PC-3 (cell line): ENCODE measurements at regions of chr22 and their contacts with region 1.

Region 1: DNA sequence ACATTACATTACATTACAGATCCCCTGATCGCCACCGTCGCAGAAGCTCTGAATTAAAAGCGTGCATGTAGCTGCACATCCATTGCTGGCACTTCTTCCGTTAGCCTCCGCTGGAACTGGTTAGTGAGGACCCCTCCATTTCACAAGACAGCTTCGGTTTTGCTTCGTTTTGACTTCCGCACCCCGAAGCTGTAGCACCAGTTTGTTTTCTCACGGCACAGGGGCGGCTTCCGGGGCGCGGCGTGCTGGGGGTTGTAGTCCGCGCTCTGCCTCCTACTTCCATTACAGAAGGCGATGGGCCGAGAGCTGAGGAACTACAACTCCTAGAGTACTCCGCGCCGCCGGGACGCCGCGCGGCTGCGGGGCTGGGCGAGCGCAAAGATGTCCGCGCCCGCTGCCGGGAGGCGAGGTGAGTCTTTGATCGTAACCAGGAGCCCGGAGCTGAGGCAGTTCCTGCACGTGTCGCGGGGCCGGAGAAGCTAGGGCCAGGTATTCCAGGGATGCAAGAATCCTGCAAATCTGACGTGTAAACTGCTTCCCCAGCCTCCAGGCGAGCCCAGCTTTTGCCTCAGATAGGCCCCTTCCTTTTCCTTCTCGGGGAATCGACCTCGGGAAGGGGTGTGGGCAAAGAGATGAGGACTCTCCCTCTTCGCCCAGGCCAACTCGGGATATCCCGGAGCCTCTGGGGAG is at the start of gene PEX26:
- DNase-seq: peak; percentile 85
- ATAC-seq: peak; percentile 95
- H3K4me3 ChIP-seq: peak within 1 kb of the TSS; percentile 98
- H3K27ac ChIP-seq: peak within 1 kb of the TSS; percentile 73
- H3K4me1 ChIP-seq: peaks cover 24% of the 10 kb centered on the region
- H3K27me3 ChIP-seq: no peaks in the 10 kb centered on the region
- CTCF ChIP-seq: no peak
- total RNA-seq, gene PEX26: 30.6 and 51.3 TPM in 2 replicates

Region 2: GRCh38 chr22:17830043-17830961 is 247.5 kb before region 1 on chr22:
- CTCF ChIA-PET with region 1: interaction called, 18 read pairs
- POLR2A ChIA-PET with region 1: no interaction called
- intact Hi-C with region 1: loop called (anchors 1 kb)
- DNase-seq: peak; percentile 80
- ATAC-seq: peak; percentile 93
- H3K4me3 ChIP-seq: no peak overlapping the region
- H3K27ac ChIP-seq: no peak overlapping the region
- H3K4me1 ChIP-seq: no peaks in the 10 kb centered on the region
- H3K27me3 ChIP-seq: no peaks in the 10 kb centered on the region
- CTCF ChIP-seq: peak; percentile 82

Region 3: DNA sequence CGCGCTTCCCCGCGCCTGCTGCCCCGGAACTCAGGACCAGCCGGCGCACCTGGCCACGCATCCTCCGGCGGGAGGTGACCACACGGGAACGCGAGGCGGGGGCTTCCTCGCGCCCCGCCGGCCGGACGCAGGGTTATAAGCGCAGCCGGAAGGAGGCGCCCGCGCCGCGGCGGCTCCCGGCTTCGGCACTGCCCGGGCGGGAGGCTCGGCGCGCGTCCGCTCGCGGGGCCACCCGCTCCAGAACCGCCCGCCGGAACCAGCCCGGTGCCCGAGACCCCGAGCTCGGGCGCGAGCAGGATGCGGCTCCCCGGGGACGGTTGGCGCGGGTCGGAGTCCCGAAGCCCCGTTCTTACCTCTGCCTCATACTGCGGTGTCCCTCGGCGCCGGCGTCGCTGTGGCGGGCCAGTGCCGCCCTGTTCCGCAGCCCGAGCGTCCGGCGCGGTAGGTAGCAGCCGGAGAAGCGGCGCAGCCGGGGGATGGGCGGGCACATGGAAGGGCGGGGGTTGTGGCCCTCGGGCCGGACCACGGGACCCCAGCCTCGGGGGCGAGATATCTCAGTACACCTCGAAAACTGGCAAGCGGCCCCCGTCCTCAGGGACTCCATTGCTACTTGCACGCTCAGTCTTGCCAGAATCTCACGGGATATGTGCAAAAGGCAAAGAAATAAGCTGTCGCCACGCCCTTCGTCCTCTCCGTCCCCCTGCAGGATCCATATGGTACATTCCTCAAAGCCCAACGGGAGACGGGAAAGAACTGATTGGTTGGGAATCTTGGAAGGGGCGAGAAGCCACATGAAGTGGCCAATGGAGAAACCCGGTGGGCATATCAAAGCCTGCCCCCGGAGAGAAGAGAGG is 76.5 kb before region 1 on chr22:
- CTCF ChIA-PET with region 1: interaction called, 12 read pairs
- POLR2A ChIA-PET with region 1: no interaction called
- intact Hi-C with region 1: loop called (anchors 1 kb)
- DNase-seq: peak; percentile 93
- ATAC-seq: peak; percentile 89
- H3K4me3 ChIP-seq: peak overlapping the region; percentile 85
- H3K27ac ChIP-seq: peak overlapping the region; percentile 77
- H3K4me1 ChIP-seq: peaks cover 17% of the 10 kb centered on the region
- H3K27me3 ChIP-seq: no peaks in the 10 kb centered on the region
- CTCF ChIP-seq: peak; percentile 3; the same call in 1 of the 2 replicates

Region 4: DNA sequence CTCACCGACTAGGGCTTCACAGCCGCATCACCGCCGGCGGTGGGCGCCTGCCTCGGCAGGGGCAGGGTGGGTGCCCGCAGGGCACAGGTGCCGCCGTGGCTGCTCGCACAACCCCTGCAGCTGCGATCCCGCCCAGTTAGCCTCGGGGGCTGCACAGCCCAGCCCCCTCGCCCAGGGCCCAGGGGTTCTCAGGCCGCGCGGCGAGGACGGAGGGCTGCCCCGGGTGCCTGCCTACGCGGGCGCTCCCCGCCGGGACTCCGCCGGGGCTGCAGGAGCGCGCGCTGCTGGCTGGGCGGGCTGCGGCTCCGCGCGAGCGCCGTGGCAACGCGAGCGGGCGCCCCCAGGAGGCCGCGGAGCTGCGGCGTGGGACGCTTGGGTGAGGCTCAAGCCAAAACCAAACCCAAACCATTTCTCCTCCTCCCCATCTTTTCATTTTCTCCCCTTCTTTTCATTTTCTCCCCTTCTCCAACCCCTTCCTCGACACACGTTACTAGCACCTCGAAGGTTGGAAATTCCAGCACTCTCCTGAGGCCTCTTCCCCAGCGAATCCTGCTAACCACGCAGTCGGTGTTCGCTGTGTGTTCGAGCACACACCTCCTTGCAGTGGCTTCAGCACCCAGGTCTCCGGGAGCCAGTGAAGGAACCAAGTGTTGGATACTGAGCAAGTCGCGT is 53.4 kb before region 1 on chr22 and contains the start of gene MICAL3:
- CTCF ChIA-PET with region 1: interaction called, 18 read pairs
- POLR2A ChIA-PET with region 1: no interaction called
- intact Hi-C with region 1: loop called (anchors 2 kb)
- DNase-seq: peak; percentile 74
- ATAC-seq: peak; percentile 87
- H3K4me3 ChIP-seq: peak within 1 kb of the TSS; percentile 81
- H3K27ac ChIP-seq: peak within 1 kb of the TSS; percentile 33
- H3K4me1 ChIP-seq: peaks cover 8% of the 10 kb centered on the region
- H3K27me3 ChIP-seq: no peaks in the 10 kb centered on the region
- CTCF ChIP-seq: peak; percentile 51; the same call in 1 of the 2 replicates
- total RNA-seq, gene MICAL3: 23.7 and 27.8 TPM in 2 replicates

Region 5: GRCh38 chr22:18088825-18089568 is 11.2 kb after region 1 on chr22:
- CTCF ChIA-PET with region 1: no interaction called
- POLR2A ChIA-PET with region 1: interaction called, 14 read pairs
- intact Hi-C with region 1: no loop called
- DNase-seq: no peak
- ATAC-seq: no peak
- H3K4me3 ChIP-seq: no peak overlapping the region
- H3K27ac ChIP-seq: no peak overlapping the region
- H3K4me1 ChIP-seq: no peaks in the 10 kb centered on the region
- H3K27me3 ChIP-seq: no peaks in the 10 kb centered on the region
- CTCF ChIP-seq: no peak